ENCODE measurements at regions of chr17 and their contacts with region 1.

Region 1: DNA sequence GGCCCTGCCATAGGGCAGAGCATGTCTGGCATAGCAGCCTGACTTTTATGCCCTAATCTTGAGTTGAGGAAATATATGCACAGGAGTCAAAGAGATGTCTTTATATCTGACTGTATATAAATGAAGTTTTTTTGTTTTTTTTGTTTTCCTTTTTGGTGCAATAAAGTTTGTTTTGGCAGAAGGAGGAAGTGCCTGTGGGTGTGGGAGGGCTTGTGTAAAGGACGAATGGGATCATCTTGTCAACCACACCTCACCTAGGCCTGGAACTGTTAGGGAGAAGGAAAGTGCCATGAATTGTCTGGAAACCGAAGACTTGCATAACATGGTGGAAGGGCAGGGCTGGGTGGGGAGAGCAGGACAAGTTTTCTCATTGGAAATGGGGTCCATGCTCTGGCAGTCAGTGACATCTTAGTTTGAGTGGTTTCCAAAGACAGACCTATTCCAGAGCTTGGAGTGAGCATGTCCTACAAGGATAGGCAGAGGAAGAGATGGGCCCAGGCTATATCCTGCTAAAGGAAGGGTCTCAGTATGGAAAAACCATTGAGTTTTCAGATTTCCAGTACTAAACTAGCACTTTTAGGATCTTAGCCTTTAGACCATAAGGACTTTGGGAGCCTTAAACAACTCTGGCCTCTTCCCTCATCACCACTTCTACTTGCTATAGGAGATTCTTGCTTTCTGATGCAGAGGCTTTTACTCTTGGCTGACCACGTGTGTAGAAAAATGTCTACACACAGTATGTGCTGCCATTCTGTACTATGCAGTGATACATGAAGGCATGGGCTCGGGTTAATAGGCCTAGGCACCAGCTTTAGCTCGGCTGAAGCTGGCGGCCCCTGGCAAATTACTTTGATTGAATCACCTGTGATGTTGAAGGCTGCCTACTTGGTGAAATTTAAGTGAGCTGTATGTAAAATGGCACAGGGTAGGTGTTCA is 15.5 kb downstream of the SNF8 start:
- H3K4me3 ChIP-seq: no peak overlapping the region
- H3K27ac ChIP-seq: peak overlapping the region; percentile 52
- H3K4me1 ChIP-seq: peaks cover 3% of the 10 kb centered on the region; the same call in 1 of the 2 replicates
- CTCF ChIP-seq: no peak

Region 2: DNA sequence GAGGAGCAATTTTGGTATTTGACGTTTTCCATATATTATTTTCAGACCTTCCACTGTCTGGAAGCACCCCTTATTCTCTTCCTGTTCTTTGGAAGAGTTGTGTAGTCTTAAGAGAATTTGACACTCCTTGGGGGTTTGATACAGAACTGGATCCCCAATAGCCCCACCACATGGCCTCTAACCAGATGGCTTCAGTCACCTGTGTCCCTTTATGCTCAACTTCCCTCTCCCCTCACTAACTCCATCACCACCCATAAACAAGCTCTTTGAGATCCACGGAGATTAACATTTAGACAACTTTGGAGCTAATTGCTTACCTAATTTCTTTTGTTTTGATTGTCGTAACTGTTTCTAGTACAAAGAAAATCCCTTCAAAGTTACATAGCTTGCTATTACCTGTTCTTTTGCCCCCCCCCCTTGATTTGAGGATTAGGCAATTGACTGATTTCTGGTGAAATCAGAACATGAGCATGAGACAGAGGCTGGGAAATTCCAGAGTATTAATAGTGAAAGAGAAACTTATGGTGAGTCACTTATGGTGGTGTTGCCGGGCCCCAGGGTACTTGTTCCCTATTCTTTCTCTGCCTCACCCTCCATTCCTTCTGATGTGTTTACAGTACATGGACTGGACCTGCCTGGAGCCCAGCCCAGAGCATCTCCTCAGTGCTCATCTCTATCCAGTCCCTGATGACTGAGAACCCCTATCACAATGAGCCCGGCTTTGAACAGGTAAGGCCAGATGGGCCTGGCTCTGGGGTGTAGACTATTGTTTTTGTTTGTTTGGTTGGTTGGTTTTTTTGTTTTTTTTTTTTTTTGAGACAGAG is 13.5 kb before region 1 on chr17:
- CTCF ChIA-PET with region 1: no interaction called
- POLR2A ChIA-PET with region 1: interaction called, 14 read pairs
- H3K4me3 ChIP-seq: no peak overlapping the region
- H3K27ac ChIP-seq: no peak overlapping the region
- H3K4me1 ChIP-seq: peaks cover 3% of the 10 kb centered on the region
- CTCF ChIP-seq: no peak

Region 3: GRCh38 chr17:48944519-48945260 is 15.5 kb after region 1 on chr17 and contains the start of gene SNF8:
- CTCF ChIA-PET with region 1: no interaction called
- POLR2A ChIA-PET with region 1: interaction called, 22 read pairs
- H3K4me3 ChIP-seq: peak within 1 kb of the TSS; percentile 69
- H3K27ac ChIP-seq: peak within 1 kb of the TSS; percentile 76
- H3K4me1 ChIP-seq: 0 out of 2 replicates have a peak, but pooled peaks cover 3% of the 10 kb centered on the region
- CTCF ChIP-seq: 0 out of 2 replicates have a peak, but pooled peaks have one; percentile 15

Region 4: DNA sequence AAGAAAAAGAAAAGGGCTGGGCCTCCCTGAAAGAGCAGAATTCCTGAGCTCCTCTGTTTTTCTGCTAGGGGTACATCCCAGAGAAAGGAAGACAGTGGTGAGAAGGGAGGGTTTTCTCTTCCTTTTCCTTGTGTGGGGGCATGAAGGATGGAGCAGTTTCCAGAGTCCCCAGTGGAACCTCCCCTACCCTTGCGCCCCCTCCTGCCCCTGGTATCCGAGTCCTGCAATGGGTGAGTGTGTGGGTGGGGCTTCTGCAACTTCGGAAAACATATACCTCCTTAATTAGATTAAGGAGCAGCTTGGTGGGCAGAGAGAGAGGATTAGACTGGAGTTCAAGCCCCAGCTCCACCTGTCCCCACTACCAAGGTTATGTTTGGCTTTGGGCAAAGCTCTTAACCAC is 44.7 kb after region 1 on chr17:
- CTCF ChIA-PET with region 1: no interaction called
- POLR2A ChIA-PET with region 1: no interaction called
- H3K4me3 ChIP-seq: no peak overlapping the region
- H3K27ac ChIP-seq: no peak overlapping the region
- H3K4me1 ChIP-seq: peaks cover 15% of the 10 kb centered on the region
- CTCF ChIP-seq: no peak